ENCODE measurements at regions of chr9 and their contacts with region 1.

Region 1: DNA sequence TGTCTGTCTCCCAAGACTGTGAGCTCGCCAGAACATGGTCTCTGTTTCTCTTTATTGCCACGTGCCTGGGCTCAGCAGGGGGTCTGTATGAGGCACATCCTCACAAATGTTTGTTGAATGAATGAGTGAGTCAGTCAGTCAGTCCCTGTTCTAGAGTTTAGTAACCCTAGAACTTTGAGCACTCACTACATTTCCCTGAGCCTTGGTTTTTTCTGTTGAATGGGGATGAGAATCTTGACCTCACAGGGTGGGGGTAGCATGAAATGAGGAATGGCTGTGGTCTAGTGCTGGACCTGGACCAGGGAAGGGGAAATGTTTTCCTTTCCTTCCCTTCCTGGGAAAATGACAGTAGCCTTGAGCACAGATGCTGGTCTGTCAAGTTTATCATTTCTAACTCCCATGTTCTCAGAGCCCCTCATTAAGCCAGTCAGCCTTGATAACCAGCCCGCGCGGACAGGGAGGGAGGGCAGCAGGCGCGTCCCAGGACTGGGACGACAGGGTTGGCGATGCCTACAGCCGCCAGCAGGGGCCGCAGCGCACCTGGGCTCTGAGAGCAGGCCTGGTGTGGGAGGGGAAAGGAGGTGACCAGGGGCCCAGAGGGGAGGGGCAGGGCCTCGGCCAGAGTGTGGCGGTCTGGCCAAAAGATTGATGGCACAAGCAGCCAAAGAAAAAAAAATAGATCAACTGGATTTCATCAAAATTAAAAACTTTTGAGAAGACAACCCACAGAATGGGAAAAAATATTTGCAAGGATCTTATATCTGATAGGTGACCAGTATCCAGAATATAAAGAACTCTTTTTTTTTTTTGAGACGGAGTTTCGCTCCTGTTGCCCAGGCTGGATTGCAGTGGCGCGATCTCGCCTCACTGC is 24.1 kb upstream of the WNK2 start:
- DNase-seq: no peak
- ATAC-seq: peak; percentile 99
- H3K4me3 ChIP-seq: no peak overlapping the region; a peak in 1 of 4 replicates
- H3K27ac ChIP-seq: no peak overlapping the region
- H3K4me1 ChIP-seq: no peaks in the 10 kb centered on the region
- H3K27me3 ChIP-seq: no peaks in the 10 kb centered on the region
- CTCF ChIP-seq: peak; percentile 96

Region 2: GRCh38 chr9:93099551-93100283 is 60.1 kb before region 1 on chr9:
- CTCF ChIA-PET with region 1: no interaction called
- POLR2A ChIA-PET with region 1: no interaction called
- in situ Hi-C with region 1: no loop called
- intact Hi-C with region 1: no loop called
- DNase-seq: no peak
- ATAC-seq: no peak
- H3K4me3 ChIP-seq: no peak overlapping the region
- H3K27ac ChIP-seq: peak overlapping the region; percentile 85; the same call in 1 of the 2 replicates
- H3K4me1 ChIP-seq: peaks cover 23% of the 10 kb centered on the region
- H3K27me3 ChIP-seq: no peaks in the 10 kb centered on the region
- CTCF ChIP-seq: no peak

Region 3: DNA sequence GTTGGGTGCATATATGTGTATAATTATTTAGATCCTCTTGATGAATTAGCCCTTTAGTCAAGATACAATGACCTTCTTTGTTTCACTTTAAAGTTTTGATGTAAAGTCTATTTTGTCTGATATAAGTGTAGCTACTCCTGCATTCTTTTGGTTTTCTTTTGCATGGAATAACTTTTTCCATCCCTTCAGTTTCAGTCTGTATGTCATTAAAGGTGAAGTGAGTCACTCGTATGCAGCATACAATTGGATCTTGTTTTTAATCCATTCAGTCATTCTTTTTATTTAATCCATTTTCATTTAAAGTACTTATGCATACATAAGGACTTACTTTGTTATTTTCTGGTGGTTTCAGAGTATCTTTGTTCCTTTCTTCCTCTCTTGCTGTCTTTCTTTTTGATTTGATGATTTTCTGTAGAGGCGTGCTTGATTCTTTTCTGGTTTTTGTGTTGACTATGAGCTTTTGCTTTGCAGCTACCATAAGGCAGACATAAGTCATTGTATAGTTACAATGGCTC is 255.4 kb after region 1 on chr9:
- CTCF ChIA-PET with region 1: no interaction called
- POLR2A ChIA-PET with region 1: no interaction called
- in situ Hi-C with region 1: no loop called
- intact Hi-C with region 1: no loop called
- DNase-seq: no peak
- ATAC-seq: no peak
- H3K4me3 ChIP-seq: no peak overlapping the region
- H3K27ac ChIP-seq: no peak overlapping the region
- H3K4me1 ChIP-seq: no peaks in the 10 kb centered on the region
- H3K27me3 ChIP-seq: no peaks in the 10 kb centered on the region; the same call in 1 of the 2 replicates
- CTCF ChIP-seq: no peak

Region 4: GRCh38 chr9:93453047-93453914 is 293.4 kb after region 1 on chr9 and contains the start of gene FAM120AOS:
- CTCF ChIA-PET with region 1: no interaction called
- POLR2A ChIA-PET with region 1: no interaction called
- in situ Hi-C with region 1: no loop called
- intact Hi-C with region 1: no loop called
- DNase-seq: peak; percentile 57
- ATAC-seq: peak; percentile 85
- H3K4me3 ChIP-seq: peak within 1 kb of the TSS; percentile 80 to 83
- H3K27ac ChIP-seq: peak within 1 kb of the TSS; percentile 85
- H3K4me1 ChIP-seq: peaks cover 7% of the 10 kb centered on the region
- H3K27me3 ChIP-seq: no peaks in the 10 kb centered on the region
- CTCF ChIP-seq: no peak
- total RNA-seq, gene FAM120AOS: 36.0 TPM

Region 5: GRCh38 chr9:93566408-93567270 is 406.8 kb after region 1 on chr9:
- CTCF ChIA-PET with region 1: no interaction called
- POLR2A ChIA-PET with region 1: no interaction called
- in situ Hi-C with region 1: no loop called
- intact Hi-C with region 1: loop called (anchors 10 kb)
- DNase-seq: peak; percentile 61
- ATAC-seq: peak; percentile 99
- H3K4me3 ChIP-seq: peak overlapping the region; percentile 50 to 75
- H3K27ac ChIP-seq: peak overlapping the region; percentile 87
- H3K4me1 ChIP-seq: no peaks in the 10 kb centered on the region; the same call in 1 of the 2 replicates
- H3K27me3 ChIP-seq: no peaks in the 10 kb centered on the region
- CTCF ChIP-seq: peak; percentile 92